T-cell (primary cell): ENCODE measurements at regions of chr1 and their contacts with region 1.

Region 1: DNA sequence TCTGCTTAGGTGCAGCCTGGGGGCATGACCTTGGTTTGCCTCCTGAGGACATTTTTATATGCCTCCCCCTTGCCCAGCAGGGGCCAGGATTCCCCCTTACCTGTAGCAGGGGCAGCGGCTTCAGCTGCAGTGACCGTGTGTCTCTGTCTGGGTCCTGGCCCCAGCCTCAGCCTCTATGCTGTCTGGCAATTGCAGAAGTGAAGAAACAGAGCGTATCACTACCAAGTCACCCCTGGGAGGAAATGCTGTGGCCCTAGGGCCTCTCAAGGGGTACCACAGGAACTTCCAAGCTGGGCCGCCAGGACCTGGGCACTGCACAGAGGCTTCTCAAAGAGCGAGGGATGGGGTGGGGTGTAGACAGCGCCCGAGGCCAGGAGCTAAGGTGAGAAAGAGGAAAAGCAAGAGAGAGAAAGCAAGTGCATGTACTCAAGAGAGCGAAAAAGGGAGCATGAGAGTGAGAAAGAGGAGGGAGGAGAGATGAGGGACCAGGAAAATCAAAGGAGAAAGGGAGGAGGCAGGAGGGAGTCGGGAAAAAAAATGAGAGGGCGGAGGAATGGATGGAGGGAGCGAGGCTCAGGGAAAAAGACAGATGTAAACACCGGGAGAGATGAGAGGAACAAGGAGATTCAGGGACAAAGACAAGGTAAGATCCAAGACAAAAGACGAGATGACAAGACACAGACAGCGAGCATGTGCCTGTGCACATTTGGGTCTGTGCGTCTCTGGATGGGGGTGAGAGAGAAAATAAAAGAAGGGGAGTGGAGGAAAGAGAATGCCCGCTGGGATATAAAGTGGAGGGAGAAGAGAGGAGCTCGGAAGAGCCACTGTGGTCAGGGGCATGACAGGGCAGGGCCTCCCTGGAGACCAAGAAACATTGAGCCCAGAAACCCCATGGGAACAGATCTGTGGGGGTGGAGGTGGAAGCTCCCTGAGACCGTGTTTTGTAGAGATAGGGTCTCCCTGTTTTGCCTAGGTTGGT is at the start of gene PTAFR:
- DNase-seq: peak in 3 of 35 experiments; percentile 5 to 33 (median 20)
- ATAC-seq: peak in 1 of 4 experiments; percentile 8
- H3K4me3 ChIP-seq: no peak within 1 kb of the TSS
- H3K4me3 Mint-ChIP-seq: no peak within 1 kb of the TSS
- H3K27ac ChIP-seq: no peak within 1 kb of the TSS
- H3K27ac Mint-ChIP-seq: no peak within 1 kb of the TSS
- H3K4me1 ChIP-seq: peaks cover 11 to 31% of the 10 kb centered on the region in 2 experiments
- H3K4me1 Mint-ChIP-seq: peaks cover 27 to 50% (median 34%) of the 10 kb centered on the region in 3 donors
- H3K27me3 ChIP-seq: peaks cover 0 to 17% of the 10 kb centered on the region in 2 experiments
- H3K27me3 Mint-ChIP-seq: no peaks in the 10 kb centered on the region
- total RNA-seq, gene PTAFR: 0.37 to 3.8 (median 0.95) TPM

Region 2: GRCh38 chr1:28370239-28371009 is 193.6 kb after region 1 on chr1:
- CTCF ChIA-PET with region 1: no interaction called
- POLR2A ChIA-PET with region 1: no interaction called
- DNase-seq: peak in 24 of 35 experiments; percentile 1 to 44 (median 11)
- ATAC-seq: peak in 1 of 4 experiments; percentile 44
- H3K4me3 ChIP-seq: peak overlapping the region; percentile 94 to 96
- H3K4me3 Mint-ChIP-seq: peak overlapping the region; percentile 91 to 95 (median 93)
- H3K27ac ChIP-seq: peak overlapping the region; percentile 51
- H3K27ac Mint-ChIP-seq: peak overlapping the region; percentile 86
- H3K4me1 ChIP-seq: peaks cover 2 to 37% of the 10 kb centered on the region in 2 experiments
- H3K4me1 Mint-ChIP-seq: peaks cover 25 to 46% (median 41%) of the 10 kb centered on the region in 3 donors
- H3K27me3 ChIP-seq: no peaks in the 10 kb centered on the region
- H3K27me3 Mint-ChIP-seq: no peaks in the 10 kb centered on the region

Region 3: GRCh38 chr1:29033829-29034466 is 857.2 kb after region 1 on chr1:
- CTCF ChIA-PET with region 1: no interaction called
- POLR2A ChIA-PET with region 1: interaction called in 1 of 2 experiments, 11 read pairs
- DNase-seq: peak in 2 of 35 experiments; percentile 10 to 63
- ATAC-seq: peak in 3 of 4 experiments; percentile 41 to 57 (median 44)
- H3K4me3 ChIP-seq: no peak overlapping the region
- H3K4me3 Mint-ChIP-seq: no peak overlapping the region
- H3K27ac ChIP-seq: no peak overlapping the region
- H3K27ac Mint-ChIP-seq: no peak overlapping the region
- H3K4me1 ChIP-seq: no peaks in the 10 kb centered on the region
- H3K4me1 Mint-ChIP-seq: peaks cover 0 to 4% (median 0%) of the 10 kb centered on the region in 3 donors
- H3K27me3 ChIP-seq: no peaks in the 10 kb centered on the region
- H3K27me3 Mint-ChIP-seq: no peaks in the 10 kb centered on the region